Uterus (tissue), 4 donors: ENCODE measurements at regions of chr11 and their contacts with region 1.

Region 1: GRCh38 chr11:88266157-88266556 is 71.4 kb downstream of the CTSC start:
- DNase-seq: no peak
- H3K4me3 ChIP-seq: no peak overlapping the region
- H3K27ac ChIP-seq: no peak overlapping the region
- H3K4me1 ChIP-seq: no peaks in the 10 kb centered on the region
- H3K27me3 ChIP-seq: no peaks in the 10 kb centered on the region
- CTCF ChIP-seq: no peak
- POLR2A ChIP-seq: no peak

Region 2: GRCh38 chr11:88016392-88017170 is 249.6 kb before region 1 on chr11:
- intact Hi-C with region 1: no loop called
- DNase-seq: peak; percentile 40 to 80
- H3K4me3 ChIP-seq: no peak overlapping the region
- H3K27ac ChIP-seq: no peak overlapping the region
- H3K4me1 ChIP-seq: no peaks in the 10 kb centered on the region
- H3K27me3 ChIP-seq: no peaks in the 10 kb centered on the region
- CTCF ChIP-seq: peak; percentile 63 to 81 (median 70)
- POLR2A ChIP-seq: no peak

Region 3: DNA sequence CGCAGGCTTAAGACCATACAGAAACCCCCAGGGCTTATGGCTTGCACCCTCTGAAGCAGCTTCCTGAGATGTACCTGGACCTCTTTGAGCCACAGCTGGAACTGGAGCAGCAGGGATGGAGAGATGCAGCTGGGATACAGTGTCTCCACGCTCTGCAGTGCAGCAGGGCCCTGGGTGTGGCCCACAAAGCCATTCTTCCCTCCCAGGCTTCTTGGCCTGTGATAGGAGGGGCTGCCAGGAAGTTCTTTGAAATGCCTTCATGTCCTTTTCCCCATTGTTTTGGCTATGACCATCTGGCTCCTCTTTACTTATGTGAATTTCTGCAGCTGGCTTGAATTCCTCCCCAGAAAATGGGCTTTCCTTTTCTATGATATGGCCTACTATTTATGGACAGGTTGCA is 53.9 kb before region 1 on chr11:
- intact Hi-C with region 1: loop called (anchors 2 kb)
- DNase-seq: no peak
- H3K4me3 ChIP-seq: no peak overlapping the region
- H3K27ac ChIP-seq: no peak overlapping the region
- H3K4me1 ChIP-seq: no peaks in the 10 kb centered on the region
- H3K27me3 ChIP-seq: no peaks in the 10 kb centered on the region
- CTCF ChIP-seq: no peak
- POLR2A ChIP-seq: no peak